ENCODE measurements at regions of chr1 and their contacts with region 1.

Region 1: GRCh38 chr1:204544321-204544720 is 28.1 kb downstream of the MDM4 start:
- DNase-seq: peak in 2 of 9 experiments; percentile 63 to 78
- ATAC-seq: peak; percentile 91
- H3K4me3 ChIP-seq: no peak overlapping the region
- H3K4me3 Mint-ChIP-seq: peak overlapping the region; percentile 8
- H3K27ac ChIP-seq: peak overlapping the region; percentile 24 to 86
- H3K27ac Mint-ChIP-seq: peak overlapping the region; percentile 88
- H3K4me1 ChIP-seq: peaks cover 51% of the 10 kb centered on the region
- H3K4me1 Mint-ChIP-seq: peaks cover 60% of the 10 kb centered on the region
- H3K27me3 ChIP-seq: no peaks in the 10 kb centered on the region
- H3K27me3 Mint-ChIP-seq: no peaks in the 10 kb centered on the region
- CTCF ChIP-seq: no peak

Region 2: GRCh38 chr1:204523605-204524215 is 20.6 kb before region 1 on chr1:
- CTCF ChIA-PET with region 1: interaction called, 4 read pairs
- POLR2A ChIA-PET with region 1: interaction called, 5 read pairs
- intact Hi-C with region 1: loop called (anchors 1 to 2 kb)
- DNase-seq: no peak
- ATAC-seq: no peak
- H3K4me3 ChIP-seq: peak overlapping the region in 1 of 2 experiments; percentile 2
- H3K4me3 Mint-ChIP-seq: peak overlapping the region; percentile 26
- H3K27ac ChIP-seq: no peak overlapping the region
- H3K27ac Mint-ChIP-seq: peak overlapping the region; percentile 60
- H3K4me1 ChIP-seq: peaks cover 65% of the 10 kb centered on the region
- H3K4me1 Mint-ChIP-seq: peaks cover 66% of the 10 kb centered on the region
- H3K27me3 ChIP-seq: no peaks in the 10 kb centered on the region
- H3K27me3 Mint-ChIP-seq: no peaks in the 10 kb centered on the region
- CTCF ChIP-seq: no peak

Region 3: DNA sequence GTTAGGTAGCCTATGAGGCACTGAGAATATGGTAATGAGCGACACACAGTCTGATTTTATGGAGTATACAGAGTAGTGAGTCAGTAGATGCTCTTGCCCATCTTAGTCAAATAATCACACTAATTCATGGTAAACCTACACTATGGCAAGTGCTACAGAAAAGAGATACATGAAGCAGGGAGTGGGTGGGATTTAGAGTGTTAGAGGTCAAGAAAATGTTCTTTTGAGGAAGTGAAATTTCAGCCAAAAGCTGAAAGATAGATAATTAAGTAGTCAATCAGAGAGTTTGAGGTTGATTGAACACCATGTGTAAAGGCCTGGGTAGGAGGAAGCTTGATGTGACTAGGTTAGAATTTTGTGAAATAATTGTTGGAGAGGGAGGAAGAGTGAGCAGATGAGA is 13.4 kb before region 1 on chr1:
- CTCF ChIA-PET with region 1: interaction called, 4 read pairs
- POLR2A ChIA-PET with region 1: interaction called, 5 read pairs
- intact Hi-C with region 1: loop called in 1 of 2 experiments (anchors 2 kb)
- DNase-seq: no peak
- ATAC-seq: no peak
- H3K4me3 ChIP-seq: no peak overlapping the region
- H3K4me3 Mint-ChIP-seq: no peak overlapping the region
- H3K27ac ChIP-seq: no peak overlapping the region
- H3K27ac Mint-ChIP-seq: no peak overlapping the region
- H3K4me1 ChIP-seq: peaks cover 12% of the 10 kb centered on the region
- H3K4me1 Mint-ChIP-seq: peaks cover 32% of the 10 kb centered on the region
- H3K27me3 ChIP-seq: no peaks in the 10 kb centered on the region
- H3K27me3 Mint-ChIP-seq: no peaks in the 10 kb centered on the region
- CTCF ChIP-seq: no peak

Region 4: GRCh38 chr1:204565617-204566582 is 21.6 kb after region 1 on chr1:
- CTCF ChIA-PET with region 1: interaction called, 13 read pairs
- POLR2A ChIA-PET with region 1: interaction called, 3 read pairs
- intact Hi-C with region 1: loop called in 1 of 2 experiments (anchors 2 kb)
- DNase-seq: peak; percentile 25 to 84 (median 55)
- ATAC-seq: peak; percentile 93
- H3K4me3 ChIP-seq: no peak overlapping the region
- H3K4me3 Mint-ChIP-seq: no peak overlapping the region
- H3K27ac ChIP-seq: peak overlapping the region in 1 of 2 experiments; percentile 9
- H3K27ac Mint-ChIP-seq: peak overlapping the region; percentile 10
- H3K4me1 ChIP-seq: peaks cover 35% of the 10 kb centered on the region
- H3K4me1 Mint-ChIP-seq: peaks cover 52% of the 10 kb centered on the region
- H3K27me3 ChIP-seq: no peaks in the 10 kb centered on the region
- H3K27me3 Mint-ChIP-seq: no peaks in the 10 kb centered on the region
- CTCF ChIP-seq: peak; percentile 70

Region 5: DNA sequence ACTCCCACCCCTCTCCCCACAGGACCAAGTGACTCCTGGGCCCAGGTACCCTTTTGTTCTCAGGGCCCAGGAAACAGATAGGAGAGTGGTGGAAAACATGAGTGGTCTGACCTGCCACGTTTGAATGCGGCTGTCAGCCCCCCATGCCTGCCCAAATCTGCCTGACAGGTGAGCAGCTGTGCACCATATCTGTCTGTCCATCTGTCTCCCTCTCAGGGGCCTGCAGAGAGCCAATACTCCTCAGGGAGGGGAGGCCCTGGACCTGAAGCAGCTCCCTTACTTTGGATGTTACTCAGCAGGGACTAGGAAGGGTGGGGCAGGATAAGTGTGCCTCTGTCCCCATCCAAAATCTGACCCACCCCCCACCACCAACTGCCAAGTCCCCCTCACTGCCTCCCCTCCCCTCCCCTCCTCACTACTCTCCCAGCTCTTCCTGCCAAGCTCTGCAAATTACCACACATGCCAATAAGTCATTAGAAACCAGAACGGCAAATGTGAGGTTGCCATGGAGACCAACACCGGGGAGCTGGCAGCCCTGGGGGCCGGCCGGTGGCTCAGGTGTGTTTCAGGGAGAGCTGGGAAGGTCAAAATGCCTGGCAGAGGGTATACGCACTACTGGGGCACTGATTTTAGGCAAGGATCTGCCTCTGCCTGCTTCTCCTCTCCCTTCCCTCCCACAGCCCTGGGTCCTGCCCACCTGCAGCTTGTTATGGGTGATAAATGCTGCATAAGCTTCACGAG is 129.8 kb after region 1 on chr1:
- CTCF ChIA-PET with region 1: no interaction called
- POLR2A ChIA-PET with region 1: no interaction called
- intact Hi-C with region 1: no loop called
- DNase-seq: no peak
- ATAC-seq: no peak
- H3K4me3 ChIP-seq: no peak overlapping the region
- H3K4me3 Mint-ChIP-seq: no peak overlapping the region
- H3K27ac ChIP-seq: no peak overlapping the region
- H3K27ac Mint-ChIP-seq: no peak overlapping the region
- H3K4me1 ChIP-seq: no peaks in the 10 kb centered on the region
- H3K4me1 Mint-ChIP-seq: no peaks in the 10 kb centered on the region
- H3K27me3 ChIP-seq: no peaks in the 10 kb centered on the region
- H3K27me3 Mint-ChIP-seq: peaks cover 5% of the 10 kb centered on the region
- CTCF ChIP-seq: no peak

Region 6: GRCh38 chr1:204889681-204890383 is 345.5 kb after region 1 on chr1:
- CTCF ChIA-PET with region 1: no interaction called
- POLR2A ChIA-PET with region 1: no interaction called
- intact Hi-C with region 1: no loop called
- DNase-seq: no peak
- ATAC-seq: no peak
- H3K4me3 ChIP-seq: no peak overlapping the region
- H3K4me3 Mint-ChIP-seq: no peak overlapping the region
- H3K27ac ChIP-seq: no peak overlapping the region
- H3K27ac Mint-ChIP-seq: no peak overlapping the region
- H3K4me1 ChIP-seq: no peaks in the 10 kb centered on the region
- H3K4me1 Mint-ChIP-seq: peaks cover 3% of the 10 kb centered on the region
- H3K27me3 ChIP-seq: no peaks in the 10 kb centered on the region
- H3K27me3 Mint-ChIP-seq: peaks cover 31% of the 10 kb centered on the region
- CTCF ChIP-seq: no peak

Measured in CD8-positive, alpha-beta T cell (primary cell).